AG04450 (cell line): ENCODE measurements at regions of chr1 and their contacts with region 1.

Region 1: GRCh38 chr1:62144238-62144831 is 50.3 kb upstream of the L1TD1 start:
- DNase-seq: peak; percentile 11
- H3K4me3 ChIP-seq: no peak overlapping the region
- H3K27ac ChIP-seq: no peak overlapping the region
- H3K27me3 ChIP-seq: no peaks in the 10 kb centered on the region
- CTCF ChIP-seq: peak; percentile 75

Region 2: DNA sequence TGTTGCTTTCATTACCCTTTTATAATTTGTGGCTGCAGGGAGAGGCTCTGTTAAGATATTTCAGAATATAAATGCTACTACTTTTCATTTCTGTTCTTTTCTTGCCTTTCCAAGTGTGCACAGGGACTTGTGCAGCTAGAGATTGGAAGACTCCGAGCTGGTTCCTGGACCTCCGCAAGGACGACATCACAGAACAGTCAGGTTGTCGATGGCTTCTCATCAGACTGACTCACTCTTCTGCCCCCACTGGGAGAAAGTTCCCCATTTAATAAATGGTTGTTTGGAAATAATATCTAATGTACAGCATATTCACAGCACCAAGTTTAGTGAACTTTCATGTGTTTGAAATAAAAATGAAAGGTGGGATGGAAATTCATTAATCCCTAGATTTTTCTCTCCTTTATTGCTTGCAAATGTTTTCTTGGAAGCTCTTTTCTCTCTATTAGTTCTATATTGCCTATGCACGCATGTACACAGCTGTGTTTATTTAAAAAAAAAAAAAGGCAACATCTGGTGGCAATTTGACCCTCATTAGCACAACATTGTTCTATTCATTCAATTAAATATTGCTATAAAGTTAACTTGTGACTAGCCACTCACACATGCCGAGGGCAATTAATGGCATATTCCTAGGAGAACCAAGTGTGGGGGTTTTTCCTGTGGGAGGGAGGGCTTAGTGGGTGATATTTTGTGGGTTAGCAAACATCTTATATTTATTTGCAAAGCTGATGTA is 27.2 kb before region 1 on chr1:
- CTCF ChIA-PET with region 1: interaction called, 17 read pairs
- POLR2A ChIA-PET with region 1: no interaction called
- DNase-seq: no peak
- H3K4me3 ChIP-seq: no peak overlapping the region
- H3K27ac ChIP-seq: no peak overlapping the region
- H3K27me3 ChIP-seq: no peaks in the 10 kb centered on the region
- CTCF ChIP-seq: no peak

Region 3: GRCh38 chr1:62131093-62131725 is 13.1 kb before region 1 on chr1:
- CTCF ChIA-PET with region 1: interaction called, 35 read pairs
- POLR2A ChIA-PET with region 1: no interaction called
- DNase-seq: peak; percentile 46
- H3K4me3 ChIP-seq: no peak overlapping the region
- H3K27ac ChIP-seq: no peak overlapping the region
- H3K27me3 ChIP-seq: no peaks in the 10 kb centered on the region
- CTCF ChIP-seq: peak; percentile 99

Region 4: DNA sequence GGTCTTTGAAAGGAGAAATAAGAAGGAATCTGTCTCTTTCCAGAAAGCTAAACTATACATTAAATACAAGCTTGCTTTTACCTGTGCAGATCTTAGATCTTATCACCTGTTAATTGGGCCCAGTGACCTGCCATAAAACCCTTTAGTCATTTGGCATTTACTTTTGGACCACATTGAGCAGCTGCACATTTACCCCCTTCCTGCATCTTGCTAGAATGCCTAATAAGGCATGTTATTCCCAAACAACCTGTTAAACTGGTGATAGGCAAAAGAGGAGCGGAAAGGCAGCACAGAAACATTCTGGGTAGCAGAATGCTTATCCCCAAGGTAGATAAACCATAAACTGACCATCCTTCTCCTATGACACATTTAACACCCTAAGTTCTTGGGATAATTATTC is 10.4 kb after region 1 on chr1:
- CTCF ChIA-PET with region 1: interaction called, 14 read pairs
- POLR2A ChIA-PET with region 1: no interaction called
- DNase-seq: no peak
- H3K4me3 ChIP-seq: no peak overlapping the region
- H3K27ac ChIP-seq: no peak overlapping the region
- H3K27me3 ChIP-seq: no peaks in the 10 kb centered on the region
- CTCF ChIP-seq: no peak